ENCODE measurements at regions of chr17 and their contacts with region 1.

Region 1: DNA sequence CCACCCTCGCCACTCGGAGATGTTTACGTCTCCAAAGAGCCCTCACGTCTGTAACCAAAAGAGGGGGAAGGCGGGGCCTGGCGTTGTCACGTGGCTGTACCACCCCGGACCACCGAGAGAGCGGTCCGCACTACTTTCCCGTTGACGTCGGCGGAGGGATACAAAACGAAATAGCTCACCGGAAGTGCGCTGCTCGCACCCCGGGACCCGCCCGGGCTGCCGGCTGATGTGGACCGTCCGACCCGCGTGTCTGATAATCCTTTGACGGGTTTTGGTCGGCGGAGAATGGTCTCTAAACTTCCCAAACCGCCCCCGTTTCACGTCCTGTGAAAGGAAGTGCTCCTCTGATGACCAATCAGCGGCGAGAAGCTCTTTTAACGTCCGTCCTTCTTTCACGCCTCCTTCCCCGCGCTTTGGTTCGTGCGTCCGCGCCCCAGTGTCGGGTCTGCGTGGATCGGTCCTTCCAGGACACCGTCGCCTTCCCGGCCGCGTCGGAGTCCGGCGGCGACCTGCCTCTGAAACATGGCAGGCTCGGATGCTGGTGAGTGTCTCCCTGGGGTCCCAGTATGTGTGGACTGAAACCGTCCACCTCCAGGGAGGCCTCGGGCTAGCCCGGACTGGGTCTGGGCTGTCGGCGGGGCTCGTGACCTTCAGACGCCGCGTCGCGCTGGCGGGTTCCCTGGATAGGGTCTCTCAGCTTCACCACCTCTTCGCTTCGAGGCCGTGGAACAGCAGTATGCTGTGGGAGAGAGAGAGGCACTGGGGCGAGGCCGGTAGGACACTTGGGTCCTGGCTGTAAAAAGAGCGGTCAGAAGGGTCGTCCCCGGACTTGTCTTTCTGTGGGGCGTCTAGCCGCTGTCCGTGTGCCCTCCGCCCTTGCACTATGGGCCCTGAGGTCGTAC is at the start of gene CEP95:
- DNase-seq: peak; percentile 91
- ATAC-seq: peak; percentile 53
- H3K4me3 Mint-ChIP-seq: peak within 1 kb of the TSS; percentile 100
- H3K27ac Mint-ChIP-seq: peak within 1 kb of the TSS; percentile 100
- H3K4me1 Mint-ChIP-seq: peaks cover 50% of the 10 kb centered on the region
- H3K27me3 Mint-ChIP-seq: no peaks in the 10 kb centered on the region
- CTCF ChIP-seq: no peak
- total RNA-seq, gene CEP95: 65.3 and 77.0 TPM in 2 replicates

Region 2: DNA sequence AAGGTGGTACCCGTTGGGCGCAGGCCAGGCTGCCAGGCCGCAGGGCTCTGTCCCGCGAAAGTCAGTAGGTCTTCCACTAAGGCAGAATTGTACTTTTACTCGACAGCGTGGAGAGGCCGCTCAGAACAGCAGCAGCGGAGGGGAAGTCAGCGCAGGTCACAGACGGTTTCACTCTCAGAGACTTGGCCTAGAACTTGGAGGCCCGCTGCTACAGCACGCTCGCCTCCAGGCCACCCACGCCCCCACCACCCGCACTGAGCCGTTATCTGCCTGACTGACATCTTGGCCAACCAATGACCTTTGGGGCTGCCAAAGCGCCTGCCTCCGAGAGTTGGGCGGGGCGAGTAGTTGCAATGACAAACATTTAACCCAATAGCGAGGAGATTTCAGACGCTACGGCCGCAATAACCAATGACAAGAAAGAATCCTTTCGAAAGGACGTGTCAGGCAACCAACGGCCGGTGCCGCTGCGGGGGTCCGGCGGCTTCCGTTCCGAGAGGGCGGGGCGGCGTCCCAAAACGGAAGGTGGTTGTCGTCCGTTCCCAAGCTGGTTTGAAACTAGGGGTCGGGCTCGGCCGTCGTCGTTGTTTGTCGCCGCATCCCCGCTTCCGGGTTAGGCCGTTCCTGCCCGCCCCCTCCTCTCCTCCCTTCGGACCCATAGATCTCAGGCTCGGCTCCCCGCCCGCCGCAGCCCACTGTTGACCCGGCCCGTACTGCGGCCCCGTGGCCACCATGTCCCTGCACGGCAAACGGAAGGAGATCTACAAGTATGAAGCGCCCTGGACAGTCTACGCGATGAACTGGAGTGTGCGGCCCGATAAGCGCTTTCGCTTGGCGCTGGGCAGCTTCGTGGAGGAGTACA is 956.6 kb before region 1 on chr17 and contains the start of gene DCAF7:
- CTCF ChIA-PET with region 1: no interaction called
- POLR2A ChIA-PET with region 1: no interaction called
- intact Hi-C with region 1: loop called (anchors 5 kb)
- DNase-seq: peak; percentile 94
- ATAC-seq: peak; percentile 94
- H3K4me3 Mint-ChIP-seq: peak within 1 kb of the TSS; percentile 99
- H3K27ac Mint-ChIP-seq: peak within 1 kb of the TSS; percentile 95
- H3K4me1 Mint-ChIP-seq: peaks cover 56% of the 10 kb centered on the region
- H3K27me3 Mint-ChIP-seq: no peaks in the 10 kb centered on the region
- CTCF ChIP-seq: no peak
- total RNA-seq, gene DCAF7: 91.9 and 103 TPM in 2 replicates

Region 3: DNA sequence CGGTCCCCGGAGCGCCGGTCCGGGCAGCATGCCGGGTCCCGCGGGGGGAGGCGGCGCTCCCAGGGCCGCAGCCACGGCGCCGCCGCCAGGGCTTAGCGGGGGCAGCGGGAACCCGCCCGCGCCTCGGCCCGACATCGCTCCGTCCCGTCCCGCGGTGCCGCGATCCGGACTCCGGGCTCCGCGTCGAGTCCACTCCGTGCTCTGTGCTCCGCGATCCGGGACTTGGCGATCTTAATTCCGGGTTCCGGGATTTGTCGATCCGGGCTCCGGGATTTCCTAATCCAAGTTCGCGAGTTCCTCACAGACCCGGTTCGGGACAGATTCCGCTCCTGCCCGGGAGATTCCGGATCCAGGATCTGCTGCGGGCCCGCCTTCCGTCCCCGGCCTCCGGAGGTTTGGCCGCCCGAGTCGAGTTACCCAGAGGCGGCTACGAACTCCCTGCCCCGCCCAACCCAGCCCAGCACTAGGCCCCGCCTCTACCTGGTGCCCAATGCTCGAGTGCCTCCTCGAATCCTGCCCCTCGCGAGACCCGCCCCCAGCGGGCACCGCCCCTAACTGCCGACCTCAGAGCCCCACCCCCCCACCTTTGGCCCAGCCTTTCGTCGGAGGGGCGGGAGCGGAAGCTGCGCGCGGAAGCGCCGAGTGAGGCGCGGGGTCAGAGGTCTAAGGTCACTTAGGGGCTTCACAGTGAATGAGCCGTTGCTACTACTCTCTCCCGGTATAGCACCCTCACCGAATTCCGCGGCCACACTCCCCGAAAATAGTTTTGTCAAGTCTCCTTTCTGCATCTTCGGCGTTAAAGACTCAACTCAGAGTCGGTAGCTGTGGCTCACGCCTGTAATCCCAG is 664.1 kb before region 1 on chr17 and contains the start of gene SMARCD2:
- CTCF ChIA-PET with region 1: no interaction called
- POLR2A ChIA-PET with region 1: interaction called, 23 read pairs
- intact Hi-C with region 1: loop called (anchors 1 kb)
- DNase-seq: peak; percentile 96
- ATAC-seq: peak; percentile 90
- H3K4me3 Mint-ChIP-seq: peak within 1 kb of the TSS; percentile 94
- H3K27ac Mint-ChIP-seq: peak within 1 kb of the TSS; percentile 95
- H3K4me1 Mint-ChIP-seq: peaks cover 49% of the 10 kb centered on the region
- H3K27me3 Mint-ChIP-seq: no peaks in the 10 kb centered on the region
- CTCF ChIP-seq: no peak
- total RNA-seq, gene SMARCD2: 114 and 117 TPM in 2 replicates

Region 4: DNA sequence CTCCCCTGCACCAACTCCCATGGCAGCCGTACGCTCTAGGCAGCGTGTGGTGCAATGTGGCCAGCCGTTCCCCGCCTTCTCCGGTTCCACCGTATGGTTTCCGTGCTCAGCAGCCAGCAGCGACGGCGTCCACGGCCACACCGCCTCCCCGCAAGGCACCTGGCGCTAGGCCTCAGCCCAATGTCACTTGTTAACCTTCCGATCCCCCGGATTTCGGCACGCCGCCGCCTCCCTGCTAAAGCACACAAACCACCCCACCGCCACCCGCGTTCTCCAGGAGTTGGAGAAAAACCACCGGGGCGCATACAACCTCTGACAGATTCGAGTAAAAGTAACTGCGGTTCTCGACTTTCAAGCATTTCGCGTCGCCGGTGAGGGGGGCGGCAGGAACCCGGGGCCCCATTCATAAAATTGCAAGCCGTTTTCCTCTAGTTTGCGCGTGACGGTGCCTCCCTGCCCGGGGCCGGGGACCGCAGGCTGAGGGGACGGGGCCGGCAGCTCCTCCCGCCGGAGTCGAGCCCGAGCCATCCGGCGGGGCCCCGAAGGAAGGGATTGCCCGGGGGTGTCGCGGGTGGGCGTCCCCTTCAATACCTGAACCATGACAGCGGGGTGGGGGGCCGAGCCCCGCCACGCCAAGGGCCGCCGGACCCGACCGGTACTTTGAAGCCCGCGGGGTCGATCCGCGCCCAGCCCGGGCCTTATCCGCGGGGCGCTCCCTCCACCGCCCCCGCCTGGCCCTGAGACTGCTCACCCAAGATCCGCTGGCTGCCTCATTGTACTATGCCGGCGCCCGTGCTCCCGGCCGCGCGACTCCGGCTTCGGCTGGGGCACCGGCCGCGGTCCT is 244.2 kb before region 1 on chr17 and contains the start of gene TEX2:
- CTCF ChIA-PET with region 1: no interaction called
- POLR2A ChIA-PET with region 1: interaction called, 4 read pairs
- intact Hi-C with region 1: loop called (anchors 1 kb)
- DNase-seq: peak; percentile 43
- ATAC-seq: peak; percentile 25
- H3K4me3 Mint-ChIP-seq: peak within 1 kb of the TSS; percentile 88
- H3K27ac Mint-ChIP-seq: peak within 1 kb of the TSS; percentile 80
- H3K4me1 Mint-ChIP-seq: peaks cover 19% of the 10 kb centered on the region
- H3K27me3 Mint-ChIP-seq: peaks cover 10% of the 10 kb centered on the region
- CTCF ChIP-seq: no peak
- total RNA-seq, gene TEX2: 8.1 TPM in 2 replicates

Region 5: GRCh38 chr17:64378890-64379354 is 127.9 kb before region 1 on chr17:
- CTCF ChIA-PET with region 1: no interaction called
- POLR2A ChIA-PET with region 1: no interaction called
- intact Hi-C with region 1: no loop called
- DNase-seq: no peak
- ATAC-seq: no peak
- H3K4me3 Mint-ChIP-seq: no peak overlapping the region
- H3K27ac Mint-ChIP-seq: no peak overlapping the region
- H3K4me1 Mint-ChIP-seq: no peaks in the 10 kb centered on the region
- H3K27me3 Mint-ChIP-seq: no peaks in the 10 kb centered on the region
- CTCF ChIP-seq: no peak

Region 6: GRCh38 chr17:64411999-64412771 is 94.6 kb before region 1 on chr17:
- CTCF ChIA-PET with region 1: no interaction called
- POLR2A ChIA-PET with region 1: interaction called, 82 read pairs
- intact Hi-C with region 1: no loop called
- DNase-seq: peak; percentile 48
- ATAC-seq: peak; percentile 65
- H3K4me3 Mint-ChIP-seq: peak overlapping the region; percentile 83
- H3K27ac Mint-ChIP-seq: peak overlapping the region; percentile 94
- H3K4me1 Mint-ChIP-seq: peaks cover 57% of the 10 kb centered on the region
- H3K27me3 Mint-ChIP-seq: no peaks in the 10 kb centered on the region
- CTCF ChIP-seq: no peak

Region 7: DNA sequence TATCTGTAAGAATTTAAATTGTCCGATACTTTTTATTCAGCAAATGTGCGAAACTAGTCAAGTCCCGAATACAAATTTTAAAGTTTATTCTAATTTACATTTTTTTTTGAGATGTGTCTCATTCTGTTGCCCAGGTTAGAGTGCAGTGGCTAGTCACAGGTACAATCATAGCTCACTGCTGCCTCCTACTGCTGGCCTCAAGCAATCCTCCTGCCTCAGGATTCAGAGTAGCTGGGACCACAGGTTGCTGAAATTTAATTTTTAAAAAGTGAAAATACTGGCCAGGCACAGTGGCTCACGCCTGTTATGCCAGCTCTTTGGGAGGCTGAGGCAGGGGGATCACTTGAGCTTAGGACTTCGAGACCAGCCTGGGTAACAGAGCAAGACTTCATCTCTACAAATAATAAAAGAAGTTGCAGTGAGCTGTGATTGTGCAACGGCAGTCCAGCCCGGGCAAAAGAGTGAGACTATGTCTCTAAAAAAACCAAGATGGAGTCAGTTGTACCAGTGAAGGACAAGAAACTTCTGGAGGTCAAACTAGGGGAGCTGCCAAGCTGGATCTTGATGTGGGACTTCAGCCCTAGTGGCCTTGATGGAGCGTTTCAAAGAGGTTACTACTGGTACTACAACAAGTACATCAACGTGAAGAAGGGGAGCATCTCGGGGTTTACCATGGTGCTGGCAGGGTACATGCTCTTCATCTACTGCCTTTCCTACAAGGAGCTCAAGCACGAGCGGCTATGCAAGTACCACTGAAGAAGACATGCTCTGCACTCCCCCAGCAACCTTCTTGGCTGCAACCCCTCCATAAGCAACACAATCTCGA is 15.6 kb before region 1 on chr17:
- CTCF ChIA-PET with region 1: interaction called, 4 read pairs
- POLR2A ChIA-PET with region 1: interaction called, 295 read pairs
- intact Hi-C with region 1: loop called (anchors 2 kb)
- DNase-seq: no peak
- ATAC-seq: peak; percentile 72
- H3K4me3 Mint-ChIP-seq: no peak overlapping the region
- H3K27ac Mint-ChIP-seq: no peak overlapping the region
- H3K4me1 Mint-ChIP-seq: peaks cover 28% of the 10 kb centered on the region
- H3K27me3 Mint-ChIP-seq: no peaks in the 10 kb centered on the region
- CTCF ChIP-seq: no peak

Region 8: DNA sequence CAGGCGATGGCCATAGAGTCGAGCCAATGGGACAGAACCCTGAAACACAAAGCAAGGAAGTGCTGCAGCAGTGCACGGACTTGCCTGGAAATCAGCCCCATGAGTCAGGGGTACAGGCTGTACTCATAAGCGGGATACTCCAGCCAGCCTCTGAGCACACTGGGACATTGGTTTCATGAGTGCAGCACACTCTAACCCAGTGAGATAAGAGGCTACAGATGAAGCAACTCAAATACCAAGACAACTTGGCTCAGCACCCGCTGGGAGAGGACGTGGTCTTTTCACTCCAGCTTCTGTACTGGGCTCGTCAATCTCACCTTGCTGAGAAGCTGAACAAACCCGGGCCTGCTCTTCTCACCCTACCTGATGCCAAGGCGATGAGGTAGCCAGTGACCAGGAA is 956.4 kb after region 1 on chr17:
- CTCF ChIA-PET with region 1: no interaction called
- POLR2A ChIA-PET with region 1: no interaction called
- intact Hi-C with region 1: no loop called
- DNase-seq: no peak
- ATAC-seq: no peak
- H3K4me3 Mint-ChIP-seq: no peak overlapping the region
- H3K27ac Mint-ChIP-seq: no peak overlapping the region
- H3K4me1 Mint-ChIP-seq: no peaks in the 10 kb centered on the region
- H3K27me3 Mint-ChIP-seq: peaks cover 5% of the 10 kb centered on the region
- CTCF ChIP-seq: no peak

Measured in activated B cell treated with CpG ODN at 0.5 μM for 24 hours (primary cell).